ENCODE measurements at regions of chr6 and their contacts with region 1.

Region 1: GRCh38 chr6:20877008-20877937 is 343.0 kb downstream of the CDKAL1 start:
- DNase-seq: peak; percentile 80
- H3K4me3 ChIP-seq: no peak overlapping the region
- H3K27me3 ChIP-seq: no peaks in the 10 kb centered on the region
- CTCF ChIP-seq: no peak

Region 2: DNA sequence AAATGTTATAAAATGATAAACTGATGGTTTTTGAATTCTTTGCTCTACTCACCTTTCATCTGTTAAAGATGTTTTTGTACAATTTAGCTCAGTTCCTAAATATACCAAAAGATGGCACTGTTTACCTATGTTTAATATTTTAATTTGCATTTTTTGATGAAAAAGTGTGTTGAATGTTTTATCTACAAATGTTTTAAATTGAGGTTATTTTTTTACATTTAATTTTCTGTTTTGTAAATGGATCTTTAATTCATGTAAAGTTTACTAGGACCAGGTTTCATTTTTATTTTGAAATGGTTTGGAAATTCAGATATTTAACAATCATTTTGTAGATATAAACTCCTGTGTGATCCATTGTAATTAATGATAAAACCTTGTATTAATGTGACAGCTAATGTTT is 313.0 kb before region 1 on chr6:
- CTCF ChIA-PET with region 1: interaction called, 12 read pairs
- POLR2A ChIA-PET with region 1: no interaction called
- DNase-seq: no peak
- H3K4me3 ChIP-seq: no peak overlapping the region
- H3K27me3 ChIP-seq: no peaks in the 10 kb centered on the region
- CTCF ChIP-seq: peak; percentile 41

Region 3: DNA sequence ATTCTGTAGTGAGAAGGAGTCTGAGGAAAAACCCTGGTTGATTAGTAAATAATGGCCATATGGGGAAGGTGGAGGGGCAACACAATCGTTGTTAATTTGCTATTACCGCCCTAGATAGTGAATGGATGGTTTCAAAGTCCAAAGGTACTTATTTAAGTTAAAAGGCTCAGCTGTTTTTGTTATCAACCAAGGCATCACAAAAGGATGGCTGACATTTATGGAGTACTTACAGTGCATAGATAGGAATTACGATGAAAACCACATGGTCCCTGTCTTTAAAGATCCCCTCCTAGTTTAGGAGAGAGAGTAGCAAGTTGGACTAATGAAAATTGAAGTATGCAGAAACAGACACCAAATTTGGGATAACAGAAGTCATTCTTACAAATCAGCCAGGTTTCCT is 23.4 kb before region 1 on chr6:
- CTCF ChIA-PET with region 1: no interaction called
- POLR2A ChIA-PET with region 1: no interaction called
- DNase-seq: no peak
- H3K4me3 ChIP-seq: no peak overlapping the region
- H3K27me3 ChIP-seq: no peaks in the 10 kb centered on the region
- CTCF ChIP-seq: no peak